PC-9 (cell line): ENCODE measurements at regions of chr10 and their contacts with region 1.

Region 1: DNA sequence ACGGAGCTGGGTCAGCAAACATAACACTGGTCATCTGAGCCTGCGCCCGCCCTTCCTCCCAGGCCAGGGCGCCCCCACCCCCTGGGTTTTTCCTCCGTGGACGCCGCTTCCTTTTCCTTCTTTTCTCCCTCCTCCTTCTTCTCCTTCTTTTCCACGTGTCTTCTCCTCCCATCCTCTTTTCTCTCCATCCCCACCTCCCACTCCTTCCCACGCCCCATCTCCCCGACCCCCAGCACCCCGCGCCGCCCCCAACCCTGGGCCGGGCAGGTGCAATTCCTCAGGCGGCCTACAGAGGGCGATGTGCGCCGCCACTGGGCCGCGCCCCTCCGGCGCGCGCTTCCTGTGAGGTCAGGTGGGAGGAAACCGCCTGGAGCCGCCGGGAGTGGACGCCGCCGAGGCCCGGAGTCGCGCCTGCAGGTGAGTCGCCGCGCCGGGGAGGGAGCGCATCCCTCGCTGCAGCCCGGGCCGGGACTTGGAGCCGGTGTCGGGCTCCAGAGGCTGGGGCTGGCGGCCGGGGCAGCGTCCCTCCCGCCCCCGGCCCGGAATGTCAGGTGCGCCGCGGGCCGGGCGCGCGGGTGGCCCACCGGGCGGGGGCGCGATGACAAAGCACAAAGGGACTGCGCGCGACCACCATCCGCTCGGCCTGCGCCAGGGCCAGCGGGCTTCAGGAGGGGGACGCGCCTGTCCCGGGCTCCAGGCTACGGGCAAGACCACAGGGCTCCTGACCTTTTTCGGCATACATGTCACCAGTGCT is at the start of gene FAM241B:
- DNase-seq: peak; percentile 64 to 86
- H3K4me3 ChIP-seq: peak within 1 kb of the TSS; percentile 81
- H3K27ac ChIP-seq: no peak within 1 kb of the TSS
- H3K4me1 ChIP-seq: peaks cover 8% of the 10 kb centered on the region; the same call in 1 of the 2 replicates
- H3K27me3 ChIP-seq: peaks cover 3% of the 10 kb centered on the region; the same call in 1 of the 2 replicates
- CTCF ChIP-seq: peak; percentile 100
- total RNA-seq, gene FAM241B: 10.7 and 13.0 TPM in 2 replicates

Region 2: DNA sequence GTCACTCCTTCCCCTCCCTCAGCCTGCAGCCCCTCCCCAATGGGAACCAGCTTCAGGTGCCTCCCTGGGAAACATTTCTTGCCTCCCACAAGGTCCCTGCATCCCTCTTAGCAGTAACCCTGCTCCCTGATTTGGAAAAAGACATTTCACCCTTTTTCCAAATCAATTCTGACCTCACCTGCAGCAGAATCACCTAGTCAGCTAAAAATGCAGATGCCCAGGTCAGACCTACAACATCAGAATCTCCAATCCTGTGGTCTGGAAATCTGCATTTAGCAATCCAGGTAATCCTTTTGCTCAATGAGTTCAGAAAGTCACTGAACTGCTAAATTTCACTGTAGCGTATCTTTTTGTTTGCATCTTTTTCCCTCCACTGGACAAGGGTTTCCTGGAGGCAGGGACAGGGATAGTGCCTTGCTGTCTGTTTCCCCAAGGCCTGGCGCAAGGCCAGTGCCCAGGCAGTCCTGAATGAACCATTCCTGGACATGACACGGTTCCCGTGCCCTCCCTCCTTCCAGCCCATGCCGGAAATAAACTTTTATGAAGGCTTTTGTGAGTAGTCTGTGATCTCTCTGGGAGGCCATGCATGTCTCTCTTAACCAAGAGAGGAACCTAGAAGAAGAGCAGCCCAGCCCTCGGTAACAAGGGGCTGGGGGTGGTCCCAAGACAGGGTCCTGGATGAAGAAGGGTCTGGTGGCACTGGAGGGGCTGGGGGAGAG is 215.7 kb after region 1 on chr10:
- CTCF ChIA-PET with region 1: no interaction called
- POLR2A ChIA-PET with region 1: interaction called, 18 read pairs
- intact Hi-C with region 1: no loop called
- DNase-seq: peak in 1 of 2 experiments; percentile 54
- H3K4me3 ChIP-seq: no peak overlapping the region
- H3K27ac ChIP-seq: no peak overlapping the region
- H3K4me1 ChIP-seq: peaks cover under 1% of the 10 kb centered on the region; the same call in 1 of the 2 replicates
- H3K27me3 ChIP-seq: no peaks in the 10 kb centered on the region
- CTCF ChIP-seq: no peak